Mucosa of descending colon (tissue), 3 donors: ENCODE measurements at regions of chr2 and their contacts with region 1.

Region 1: DNA sequence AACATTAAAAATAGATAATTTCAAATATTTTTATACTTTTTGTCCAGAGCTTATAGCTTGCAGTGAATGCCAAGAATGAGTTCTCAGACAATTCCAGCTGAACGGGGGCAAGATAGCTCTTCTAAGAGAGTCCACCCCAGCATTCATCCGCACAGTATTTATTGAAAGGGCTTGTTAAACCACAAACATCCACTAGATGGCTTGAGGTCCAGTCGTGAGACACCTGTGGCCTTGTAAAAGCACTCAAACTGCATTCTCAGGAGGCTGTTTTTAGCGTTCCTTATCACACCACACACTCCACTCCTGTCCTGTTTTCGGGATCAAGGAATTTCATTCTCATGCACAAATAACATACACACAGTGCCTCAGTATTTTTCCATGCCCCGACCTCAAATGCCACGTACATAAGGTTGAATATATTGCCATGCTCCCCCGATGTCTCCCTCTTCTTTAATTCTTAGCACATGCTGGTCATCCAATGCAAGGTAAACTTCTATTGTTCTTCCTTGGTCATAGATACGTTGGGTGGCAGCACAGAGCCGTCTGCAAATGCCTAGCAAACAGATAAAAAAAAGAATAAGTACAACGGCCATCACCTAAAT is 47.4 kb downstream of the DNAJC10 start:
- DNase-seq: peak in 1 of 3 donors; percentile 31
- ATAC-seq: peak; percentile 56
- H3K4me3 ChIP-seq: no peak overlapping the region
- H3K4me1 ChIP-seq: no peaks in the 10 kb centered on the region
- CTCF ChIP-seq: no peak

Region 2: DNA sequence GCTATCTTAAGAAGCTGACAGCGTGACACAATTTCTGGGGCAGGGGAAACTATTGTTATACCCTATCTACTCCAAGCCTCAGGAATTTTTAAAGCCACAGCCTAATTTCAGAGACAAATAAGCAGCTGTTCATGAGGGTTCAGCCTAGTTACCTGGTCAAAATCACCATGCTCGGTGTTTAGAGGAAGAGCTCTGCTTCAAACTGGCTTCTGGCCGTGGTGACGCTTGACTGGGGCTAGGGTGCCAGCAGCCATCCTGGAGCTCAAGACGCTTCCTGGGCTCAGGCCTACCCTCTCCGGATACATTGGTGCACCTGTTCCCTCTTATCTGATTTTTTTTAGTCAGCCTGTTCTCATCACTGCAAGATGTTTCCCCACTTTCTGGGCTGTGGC is 61.4 kb after region 1 on chr2:
- intact Hi-C with region 1: no loop called
- DNase-seq: no peak
- ATAC-seq: peak; percentile 57
- H3K4me3 ChIP-seq: no peak overlapping the region
- H3K4me1 ChIP-seq: peaks cover 4% of the 10 kb centered on the region
- CTCF ChIP-seq: no peak

Region 3: GRCh38 chr2:182980115-182980514 is 216.7 kb after region 1 on chr2:
- intact Hi-C with region 1: loop called (anchors 10 kb)
- DNase-seq: no peak
- ATAC-seq: peak; percentile 53
- H3K4me3 ChIP-seq: no peak overlapping the region
- H3K4me1 ChIP-seq: no peaks in the 10 kb centered on the region
- CTCF ChIP-seq: no peak